ENCODE measurements at regions of chr6 and their contacts with region 1.

Region 1: DNA sequence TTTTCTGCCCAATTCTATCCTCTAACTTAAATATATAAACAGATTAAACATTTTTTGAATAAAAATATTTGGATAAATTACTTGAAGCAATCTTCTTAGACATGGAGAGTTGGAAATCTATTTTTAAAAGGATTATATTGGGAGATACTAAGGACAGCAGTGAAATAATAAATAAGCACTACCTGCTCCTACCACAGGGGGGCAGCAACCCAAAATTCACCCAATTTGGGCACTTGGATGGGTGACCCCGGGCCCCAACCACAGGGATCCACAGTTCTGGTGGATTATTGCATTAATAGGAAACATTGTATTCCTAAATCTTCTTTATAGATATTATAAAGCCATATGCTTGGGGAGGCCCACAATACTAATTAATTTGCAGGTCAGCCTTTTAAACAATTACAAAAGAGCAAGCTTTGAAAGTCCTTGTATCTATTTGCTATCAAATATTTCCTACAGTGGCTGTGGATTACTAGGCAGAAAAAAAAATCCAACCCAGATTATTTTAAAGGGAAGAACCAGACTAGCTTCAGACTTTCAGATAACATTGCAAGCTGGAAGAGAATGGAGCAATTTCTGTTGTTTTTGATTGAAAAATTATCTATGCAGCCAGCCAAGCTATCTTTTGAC is 66.4 kb upstream of the PDE10A start:
- DNase-seq: peak in 1 of 9 donors; percentile 26
- ATAC-seq: no peak
- H3K4me3 ChIP-seq: no peak overlapping the region
- H3K4me3 Mint-ChIP-seq: no peak overlapping the region
- H3K27ac ChIP-seq: no peak overlapping the region
- H3K27ac Mint-ChIP-seq: no peak overlapping the region
- H3K4me1 ChIP-seq: no peaks in the 10 kb centered on the region
- H3K4me1 Mint-ChIP-seq: no peaks in the 10 kb centered on the region
- H3K27me3 ChIP-seq: no peaks in the 10 kb centered on the region
- H3K27me3 Mint-ChIP-seq: peaks cover 0 to 10% (median 0%) of the 10 kb centered on the region in 5 donors

Region 2: GRCh38 chr6:165850434-165851019 is 121.1 kb after region 1 on chr6:
- CTCF ChIA-PET with region 1: no interaction called
- POLR2A ChIA-PET with region 1: no interaction called
- intact Hi-C with region 1: loop called in 1 of 2 experiments (anchors 1 kb)
- DNase-seq: peak in 7 of 9 donors; percentile 11 to 60 (median 33)
- ATAC-seq: peak; percentile 73
- H3K4me3 ChIP-seq: no peak overlapping the region
- H3K4me3 Mint-ChIP-seq: peak overlapping the region in 3 of 10 donors; percentile 31 to 52 (median 39)
- H3K27ac ChIP-seq: no peak overlapping the region
- H3K27ac Mint-ChIP-seq: no peak overlapping the region
- H3K4me1 ChIP-seq: no peaks in the 10 kb centered on the region
- H3K4me1 Mint-ChIP-seq: peaks cover 3 to 13% (median 7%) of the 10 kb centered on the region in 7 donors
- H3K27me3 ChIP-seq: peaks cover 0 to 1% of the 10 kb centered on the region in 2 donors
- H3K27me3 Mint-ChIP-seq: peaks cover 60 to 73% (median 66%) of the 10 kb centered on the region in 5 donors

Region 3: DNA sequence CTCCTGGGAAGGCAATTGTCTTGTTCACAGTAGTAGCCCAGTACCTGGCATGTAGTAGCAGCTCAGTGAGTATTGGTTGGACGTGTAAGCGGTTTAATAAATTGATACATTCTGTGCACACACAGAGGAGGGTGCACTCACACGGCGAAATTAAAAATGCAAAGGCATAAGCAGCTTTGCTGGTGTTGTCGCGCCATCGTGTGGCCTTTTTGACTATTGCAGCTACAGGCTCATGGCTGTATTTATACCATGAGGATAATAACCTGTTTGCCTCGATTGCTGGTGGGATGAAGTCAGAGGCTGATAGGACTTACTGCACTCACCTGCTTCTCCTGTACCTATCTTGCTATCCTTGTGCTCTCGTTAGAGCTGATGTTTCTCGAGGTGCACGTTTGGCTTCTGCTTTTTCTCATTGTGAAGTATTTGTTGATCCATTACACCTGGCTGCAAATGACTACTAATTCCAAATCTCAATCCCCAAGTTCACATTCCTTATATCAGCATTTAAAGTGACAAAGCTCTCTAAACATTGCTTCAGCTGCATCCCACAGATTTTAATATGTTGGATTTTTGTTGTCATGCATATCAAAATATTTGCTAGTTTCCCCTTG is 376.8 kb after region 1 on chr6:
- CTCF ChIA-PET with region 1: no interaction called
- POLR2A ChIA-PET with region 1: no interaction called
- intact Hi-C with region 1: loop called (anchors 2 to 5 kb)
- DNase-seq: peak in 6 of 9 donors; percentile 4 to 51 (median 34)
- ATAC-seq: peak; percentile 37
- H3K4me3 ChIP-seq: no peak overlapping the region
- H3K4me3 Mint-ChIP-seq: no peak overlapping the region
- H3K27ac ChIP-seq: no peak overlapping the region
- H3K27ac Mint-ChIP-seq: no peak overlapping the region
- H3K4me1 ChIP-seq: peaks cover 0 to 3% of the 10 kb centered on the region in 2 donors
- H3K4me1 Mint-ChIP-seq: peaks cover 0 to 6% (median 0%) of the 10 kb centered on the region in 7 donors
- H3K27me3 ChIP-seq: no peaks in the 10 kb centered on the region
- H3K27me3 Mint-ChIP-seq: peaks cover 11 to 37% (median 27%) of the 10 kb centered on the region in 5 donors

Measured in naive thymus-derived CD4-positive, alpha-beta T cell (primary cell).